Caco-2 (cell line): ENCODE measurements at regions of chrX and their contacts with region 1.

Region 1: GRCh38 chrX:153667956-153668396 is 5.6 kb downstream of the PNCK start:
- DNase-seq: peak; percentile 73 to 84
- H3K4me3 ChIP-seq: peak overlapping the region; percentile 36
- H3K4me3 Mint-ChIP-seq: peak overlapping the region; percentile 72
- H3K27ac Mint-ChIP-seq: no peak overlapping the region
- H3K4me1 ChIP-seq: no peaks in the 10 kb centered on the region
- H3K4me1 Mint-ChIP-seq: no peaks in the 10 kb centered on the region
- H3K27me3 ChIP-seq: no peaks in the 10 kb centered on the region
- H3K27me3 Mint-ChIP-seq: peaks cover 4% of the 10 kb centered on the region
- CTCF ChIP-seq: peak; percentile 74 to 79

Region 2: GRCh38 chrX:152958524-152959465 is 709.2 kb before region 1 on chrX:
- CTCF ChIA-PET with region 1: no interaction called
- POLR2A ChIA-PET with region 1: no interaction called
- intact Hi-C with region 1: loop called (anchors 2 kb)
- DNase-seq: peak; percentile 83 to 87
- H3K4me3 ChIP-seq: peak overlapping the region; percentile 45
- H3K4me3 Mint-ChIP-seq: peak overlapping the region; percentile 77
- H3K27ac Mint-ChIP-seq: peak overlapping the region; percentile 92
- H3K4me1 ChIP-seq: no peaks in the 10 kb centered on the region
- H3K4me1 Mint-ChIP-seq: no peaks in the 10 kb centered on the region
- H3K27me3 ChIP-seq: no peaks in the 10 kb centered on the region
- H3K27me3 Mint-ChIP-seq: no peaks in the 10 kb centered on the region
- CTCF ChIP-seq: peak; percentile 70 to 74

Region 3: GRCh38 chrX:153539171-153539978 is 128.6 kb before region 1 on chrX:
- CTCF ChIA-PET with region 1: interaction called, 22 read pairs
- POLR2A ChIA-PET with region 1: no interaction called
- intact Hi-C with region 1: loop called (anchors 1 kb)
- DNase-seq: peak; percentile 60 to 76
- H3K4me3 ChIP-seq: no peak overlapping the region
- H3K4me3 Mint-ChIP-seq: no peak overlapping the region
- H3K27ac Mint-ChIP-seq: no peak overlapping the region
- H3K4me1 ChIP-seq: no peaks in the 10 kb centered on the region
- H3K4me1 Mint-ChIP-seq: no peaks in the 10 kb centered on the region
- H3K27me3 ChIP-seq: no peaks in the 10 kb centered on the region
- H3K27me3 Mint-ChIP-seq: no peaks in the 10 kb centered on the region
- CTCF ChIP-seq: peak; percentile 59 to 91

Region 4: DNA sequence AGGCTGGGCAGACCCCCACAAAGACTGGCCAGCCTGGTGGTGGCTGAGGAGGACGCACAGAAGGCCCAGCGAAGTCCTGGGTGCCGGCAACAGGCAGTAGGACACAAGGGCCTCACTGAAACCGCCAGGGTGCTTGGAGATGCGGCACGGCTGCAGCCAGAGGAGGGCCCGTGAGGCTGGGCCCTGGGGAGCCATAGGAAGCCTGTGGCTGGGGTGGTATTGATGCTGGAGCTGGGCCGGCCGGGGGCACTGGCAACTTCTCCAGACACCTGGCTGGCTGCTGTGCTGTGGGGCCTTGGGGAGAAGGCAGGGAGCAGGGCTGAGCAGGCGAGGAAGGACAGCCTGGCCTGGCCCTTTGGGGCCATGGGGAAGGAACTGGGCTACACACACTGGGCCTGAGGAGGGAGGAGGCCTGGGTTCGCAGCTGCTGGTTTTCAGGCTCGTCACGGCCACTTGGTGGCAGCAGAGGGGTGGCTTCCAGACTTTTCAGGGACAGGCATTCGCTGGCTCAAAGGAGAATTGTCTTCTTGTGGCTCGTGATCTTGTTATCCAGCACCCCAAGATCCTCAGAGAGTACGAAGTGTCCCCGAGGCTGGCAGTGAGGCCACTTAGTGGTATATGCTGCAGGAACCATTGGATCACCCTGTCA is 113.3 kb before region 1 on chrX:
- CTCF ChIA-PET with region 1: interaction called, 5 read pairs
- POLR2A ChIA-PET with region 1: no interaction called
- intact Hi-C with region 1: loop called (anchors 1 kb)
- DNase-seq: peak; percentile 68 to 72
- H3K4me3 ChIP-seq: no peak overlapping the region
- H3K4me3 Mint-ChIP-seq: no peak overlapping the region
- H3K27ac Mint-ChIP-seq: no peak overlapping the region
- H3K4me1 ChIP-seq: no peaks in the 10 kb centered on the region
- H3K4me1 Mint-ChIP-seq: no peaks in the 10 kb centered on the region
- H3K27me3 ChIP-seq: no peaks in the 10 kb centered on the region
- H3K27me3 Mint-ChIP-seq: peaks cover 2% of the 10 kb centered on the region
- CTCF ChIP-seq: peak; percentile 65 to 78

Region 5: DNA sequence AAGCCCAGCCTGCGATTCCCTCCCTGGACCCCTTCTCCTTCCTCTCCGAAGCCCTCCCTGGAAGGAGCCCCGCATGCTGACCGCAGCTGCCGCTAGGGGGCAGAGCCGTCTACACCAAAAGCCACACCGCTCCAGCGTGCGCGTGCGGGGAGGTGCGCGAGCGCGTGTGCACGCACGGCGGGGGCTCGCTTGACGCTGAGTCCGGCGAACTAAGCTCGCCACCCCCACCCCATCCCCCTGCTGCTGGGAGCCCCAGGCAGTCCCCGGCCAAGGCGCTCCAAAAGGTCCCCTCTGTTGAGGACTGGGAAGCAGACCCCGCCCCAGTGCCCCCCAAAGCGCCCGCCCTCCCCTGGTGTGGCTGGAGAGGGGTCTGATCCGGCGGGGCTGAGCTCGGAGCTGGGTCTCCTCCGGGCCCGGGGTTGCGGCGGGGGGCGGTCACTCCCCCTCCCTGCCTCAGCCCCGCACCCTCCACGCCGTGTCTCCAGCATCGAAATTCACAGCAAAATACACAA is 58.0 kb before region 1 on chrX:
- CTCF ChIA-PET with region 1: interaction called, 18 read pairs
- POLR2A ChIA-PET with region 1: no interaction called
- intact Hi-C with region 1: no loop called
- DNase-seq: peak; percentile 76 to 82
- H3K4me3 ChIP-seq: peak overlapping the region; percentile 41
- H3K4me3 Mint-ChIP-seq: peak overlapping the region; percentile 65
- H3K27ac Mint-ChIP-seq: no peak overlapping the region
- H3K4me1 ChIP-seq: no peaks in the 10 kb centered on the region
- H3K4me1 Mint-ChIP-seq: no peaks in the 10 kb centered on the region
- H3K27me3 ChIP-seq: no peaks in the 10 kb centered on the region
- H3K27me3 Mint-ChIP-seq: no peaks in the 10 kb centered on the region
- CTCF ChIP-seq: peak; percentile 70 to 86

Region 6: GRCh38 chrX:153649178-153649914 is 18.6 kb before region 1 on chrX:
- CTCF ChIA-PET with region 1: interaction called, 15 read pairs
- POLR2A ChIA-PET with region 1: no interaction called
- intact Hi-C with region 1: no loop called
- DNase-seq: peak; percentile 47
- H3K4me3 ChIP-seq: no peak overlapping the region
- H3K4me3 Mint-ChIP-seq: no peak overlapping the region
- H3K27ac Mint-ChIP-seq: no peak overlapping the region
- H3K4me1 ChIP-seq: peaks cover 24% of the 10 kb centered on the region
- H3K4me1 Mint-ChIP-seq: no peaks in the 10 kb centered on the region
- H3K27me3 ChIP-seq: no peaks in the 10 kb centered on the region
- H3K27me3 Mint-ChIP-seq: no peaks in the 10 kb centered on the region
- CTCF ChIP-seq: peak in 1 of 2 experiments; percentile 47